Heart right ventricle (tissue), 16 donors: ENCODE measurements at regions of chr15 and their contacts with region 1.

Region 1: GRCh38 chr15:84773716-84774115 is 25.3 kb downstream of the ZNF592 start:
- DNase-seq: no peak
- ATAC-seq: peak in 1 of 8 donors; percentile 46
- H3K4me3 ChIP-seq: no peak overlapping the region
- H3K27ac ChIP-seq: peak overlapping the region in 1 of 10 donors; percentile 45
- H3K4me1 ChIP-seq: peaks cover 0 to 48% (median 16%) of the 10 kb centered on the region in 9 donors
- H3K27me3 ChIP-seq: no peaks in the 10 kb centered on the region
- CTCF ChIP-seq: no peak

Region 2: GRCh38 chr15:84669726-84670125 is 104.0 kb before region 1 on chr15:
- intact Hi-C with region 1: loop called in 1 of 10 experiments (anchors 10 kb)
- DNase-seq: no peak
- ATAC-seq: no peak
- H3K4me3 ChIP-seq: no peak overlapping the region
- H3K27ac ChIP-seq: no peak overlapping the region
- H3K4me1 ChIP-seq: no peaks in the 10 kb centered on the region
- H3K27me3 ChIP-seq: no peaks in the 10 kb centered on the region
- CTCF ChIP-seq: no peak